Transverse colon (tissue), 4 donors: ENCODE measurements at regions of chr17 and their contacts with region 1.

Region 1: GRCh38 chr17:27367121-27367991 is 73.4 kb downstream of the WSB1 start:
- DNase-seq: no peak
- H3K4me3 ChIP-seq: no peak overlapping the region
- H3K27ac ChIP-seq: peak overlapping the region; percentile 43 to 76 (median 64)
- H3K4me1 ChIP-seq: peaks cover 0 to 13% (median 6%) of the 10 kb centered on the region in 4 donors
- H3K27me3 ChIP-seq: no peaks in the 10 kb centered on the region
- CTCF ChIP-seq: no peak
- EP300 ChIP-seq: peak; percentile 5
- POLR2A ChIP-seq: no peak

Region 2: DNA sequence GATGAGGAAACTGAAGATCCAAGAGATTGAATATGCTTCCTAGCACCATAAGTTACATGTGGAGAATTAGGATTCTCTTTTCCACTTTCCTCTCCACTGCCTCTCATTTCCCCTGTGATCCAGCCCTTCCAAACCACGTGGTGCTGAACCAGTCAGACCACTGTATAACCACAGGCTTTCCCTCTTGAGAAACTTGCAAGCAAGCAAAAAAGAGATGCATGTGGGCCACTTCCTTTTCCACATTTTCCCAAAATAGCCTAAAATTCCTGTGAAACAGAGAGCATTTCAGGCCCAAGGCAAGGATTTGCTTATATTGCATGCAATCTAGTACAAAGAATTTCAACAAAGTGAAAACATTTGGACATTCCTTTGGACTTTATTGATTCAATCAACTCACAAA is 29.6 kb after region 1 on chr17:
- in situ Hi-C with region 1: no loop called
- intact Hi-C with region 1: no loop called
- DNase-seq: no peak
- H3K4me3 ChIP-seq: no peak overlapping the region
- H3K27ac ChIP-seq: no peak overlapping the region
- H3K4me1 ChIP-seq: no peaks in the 10 kb centered on the region
- H3K27me3 ChIP-seq: no peaks in the 10 kb centered on the region
- CTCF ChIP-seq: no peak
- EP300 ChIP-seq: no peak
- POLR2A ChIP-seq: no peak

Region 3: DNA sequence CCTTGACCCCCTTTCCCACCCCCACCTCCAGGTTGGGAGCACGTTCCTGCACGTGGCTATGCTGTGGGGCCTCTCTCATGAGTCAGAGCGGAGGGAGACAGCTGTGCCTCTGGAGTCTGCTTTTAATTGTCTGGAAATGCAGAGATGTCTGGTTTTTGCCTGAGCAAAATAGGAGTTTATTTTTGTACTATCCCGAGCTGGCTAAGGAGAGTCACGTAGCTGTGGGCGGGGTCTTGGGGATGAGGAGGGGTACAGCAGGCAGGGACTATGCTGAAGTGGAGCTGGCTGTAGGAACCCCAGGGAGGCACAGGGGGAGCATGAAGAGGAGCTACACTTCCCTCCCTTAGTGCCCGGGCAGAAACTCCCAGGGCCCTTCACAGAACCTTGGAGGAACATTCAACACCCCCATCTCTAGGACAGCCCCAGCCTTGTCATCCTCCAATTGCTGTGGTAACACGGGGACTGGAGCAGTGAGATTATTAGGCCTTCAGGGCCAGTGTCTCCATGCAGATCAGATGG is 218.9 kb after region 1 on chr17:
- in situ Hi-C with region 1: loop called in 1 of 4 experiments (anchors 10 kb)
- intact Hi-C with region 1: no loop called
- DNase-seq: no peak
- H3K4me3 ChIP-seq: no peak overlapping the region
- H3K27ac ChIP-seq: no peak overlapping the region
- H3K4me1 ChIP-seq: no peaks in the 10 kb centered on the region
- H3K27me3 ChIP-seq: no peaks in the 10 kb centered on the region
- CTCF ChIP-seq: no peak
- EP300 ChIP-seq: no peak
- POLR2A ChIP-seq: no peak